ENCODE measurements at regions of chrX and their contacts with region 1.

Region 1: GRCh38 chrX:64885850-64886249 is 90.4 kb downstream of the ZC4H2 start:
- DNase-seq: peak in 1 of 2 donors; percentile 2
- H3K4me3 ChIP-seq: no peak overlapping the region
- H3K27ac ChIP-seq: no peak overlapping the region
- H3K4me1 ChIP-seq: no peaks in the 10 kb centered on the region
- H3K27me3 ChIP-seq: no peaks in the 10 kb centered on the region
- CTCF ChIP-seq: peak in 1 of 6 experiments; percentile 13
- POLR2A ChIP-seq: no peak

Region 2: GRCh38 chrX:65502618-65503017 is 616.8 kb after region 1 on chrX:
- intact Hi-C with region 1: loop called (anchors 10 kb)
- DNase-seq: no peak
- H3K4me3 ChIP-seq: no peak overlapping the region
- H3K27ac ChIP-seq: no peak overlapping the region
- H3K4me1 ChIP-seq: no peaks in the 10 kb centered on the region
- H3K27me3 ChIP-seq: no peaks in the 10 kb centered on the region
- CTCF ChIP-seq: no peak
- POLR2A ChIP-seq: no peak

Measured in thyroid gland (tissue), 4 donors.